Activated T-helper 1 cell treated with anti-CD3 and anti-CD28 coated beads, Interleukin-12 subunit alpha, Interleukin-12 subunit beta, Interleukin-2, Interleukin-4 antibody, amounts not matched to agents 30 ng/mL and 10 ng/mL and 1 ng/mL, durations not matched to agents 14 hours and 24 hours and 36 hours (primary cell): ENCODE measurements at regions of chr2 and their contacts with region 1.

Region 1: DNA sequence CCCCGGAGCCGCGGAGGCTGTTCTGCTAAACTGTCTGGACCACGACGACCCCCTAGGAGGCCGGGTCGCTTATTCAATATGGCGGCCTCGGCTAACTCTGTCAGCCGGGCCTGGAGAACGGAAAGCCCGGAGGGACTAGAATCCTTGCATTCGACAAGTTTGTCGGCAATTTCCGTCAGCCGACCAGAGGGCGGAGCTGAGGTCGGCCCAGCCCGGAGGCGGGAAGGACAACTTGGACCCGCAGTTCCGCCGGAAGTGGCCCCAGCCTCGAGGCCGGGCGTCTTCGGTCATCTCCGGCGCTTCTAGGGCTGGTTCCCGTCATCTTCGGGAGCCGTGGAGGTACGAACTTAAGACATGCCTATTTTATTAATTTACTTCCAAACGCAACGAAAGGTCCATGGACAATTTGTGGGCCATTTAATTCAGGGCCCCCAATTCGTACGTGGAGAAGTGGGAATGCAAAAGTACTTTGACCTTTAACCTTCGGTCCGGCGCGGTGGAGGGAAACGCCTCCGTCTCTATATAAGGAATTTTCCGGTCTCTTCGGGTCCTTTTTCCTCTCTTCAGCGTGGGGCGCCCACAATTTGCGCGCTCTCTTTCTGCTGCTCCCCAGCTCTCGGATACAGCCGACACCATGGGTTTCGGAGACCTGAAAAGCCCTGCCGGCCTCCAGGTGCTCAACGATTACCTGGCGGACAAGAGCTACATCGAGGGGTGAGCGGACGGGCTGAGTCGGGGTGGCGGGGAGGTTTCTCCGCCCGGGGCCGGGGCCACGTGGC is at the starts of genes EEF1B2 and NDUFS1:
- DNase-seq: peak; percentile 97
- H3K4me3 Mint-ChIP-seq: peak within 1 kb of the TSS; percentile 99
- H3K27ac Mint-ChIP-seq: peak within 1 kb of the TSS; percentile 99
- H3K4me1 Mint-ChIP-seq: peaks cover 52% of the 10 kb centered on the region
- H3K27me3 Mint-ChIP-seq: no peaks in the 10 kb centered on the region
- total RNA-seq, gene EEF1B2: 698 and 711 TPM in 2 replicates
- total RNA-seq, gene NDUFS1: 76.6 and 78.0 TPM in 2 replicates

Region 2: DNA sequence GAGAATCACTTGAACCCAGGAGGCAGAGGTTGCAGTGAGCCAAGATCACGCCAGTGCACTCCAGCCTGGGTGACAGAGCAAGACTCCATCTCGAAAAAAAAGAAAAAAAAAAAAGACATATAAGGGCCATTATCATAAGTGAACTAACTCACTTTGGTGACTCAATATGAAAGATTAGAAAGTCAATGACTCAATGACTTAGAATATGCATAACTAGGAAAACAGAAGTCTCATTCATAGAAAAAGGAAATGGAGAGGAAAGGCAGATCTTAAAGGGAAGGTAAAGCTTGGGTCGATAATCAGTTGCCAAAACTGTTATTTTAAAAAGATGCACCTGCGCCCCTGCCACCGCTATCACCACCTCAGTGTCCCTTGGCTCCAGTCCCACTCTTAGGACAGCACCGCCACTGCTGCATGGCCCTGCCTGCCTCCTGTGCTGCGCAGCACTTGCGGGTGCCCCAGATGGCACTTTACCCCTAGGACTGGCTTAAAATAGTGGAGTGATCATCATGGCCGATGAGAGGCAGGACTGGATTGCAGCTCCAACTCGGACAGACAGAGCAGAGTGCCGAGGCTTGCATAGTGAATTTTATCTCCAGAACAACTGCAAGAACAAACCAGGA is 128.3 kb before region 1 on chr2:
- intact Hi-C with region 1: loop called (anchors 1 kb)
- DNase-seq: no peak
- H3K4me3 Mint-ChIP-seq: no peak overlapping the region
- H3K27ac Mint-ChIP-seq: peak overlapping the region; percentile 25
- H3K4me1 Mint-ChIP-seq: peaks cover 55% of the 10 kb centered on the region
- H3K27me3 Mint-ChIP-seq: no peaks in the 10 kb centered on the region

Region 3: DNA sequence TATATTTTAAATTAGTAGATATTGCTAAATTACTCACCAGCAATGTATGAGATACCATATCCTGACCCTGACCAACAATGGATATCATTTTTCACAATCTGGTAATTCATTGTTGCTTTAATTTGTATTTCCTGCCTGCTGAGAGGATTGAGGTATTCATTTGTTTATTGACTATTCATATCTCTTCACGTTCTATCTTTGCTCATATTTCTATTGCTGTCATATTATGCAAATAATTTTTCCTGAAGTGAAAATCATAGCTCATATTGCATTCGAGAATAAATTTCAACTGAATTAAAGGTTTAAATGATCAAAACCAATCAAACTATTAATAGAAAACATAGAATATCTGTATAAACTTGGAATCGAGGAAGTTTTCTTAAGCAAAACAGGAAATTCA is 104.6 kb before region 1 on chr2:
- intact Hi-C with region 1: no loop called
- DNase-seq: no peak
- H3K4me3 Mint-ChIP-seq: no peak overlapping the region
- H3K27ac Mint-ChIP-seq: no peak overlapping the region
- H3K4me1 Mint-ChIP-seq: no peaks in the 10 kb centered on the region
- H3K27me3 Mint-ChIP-seq: no peaks in the 10 kb centered on the region

Region 4: DNA sequence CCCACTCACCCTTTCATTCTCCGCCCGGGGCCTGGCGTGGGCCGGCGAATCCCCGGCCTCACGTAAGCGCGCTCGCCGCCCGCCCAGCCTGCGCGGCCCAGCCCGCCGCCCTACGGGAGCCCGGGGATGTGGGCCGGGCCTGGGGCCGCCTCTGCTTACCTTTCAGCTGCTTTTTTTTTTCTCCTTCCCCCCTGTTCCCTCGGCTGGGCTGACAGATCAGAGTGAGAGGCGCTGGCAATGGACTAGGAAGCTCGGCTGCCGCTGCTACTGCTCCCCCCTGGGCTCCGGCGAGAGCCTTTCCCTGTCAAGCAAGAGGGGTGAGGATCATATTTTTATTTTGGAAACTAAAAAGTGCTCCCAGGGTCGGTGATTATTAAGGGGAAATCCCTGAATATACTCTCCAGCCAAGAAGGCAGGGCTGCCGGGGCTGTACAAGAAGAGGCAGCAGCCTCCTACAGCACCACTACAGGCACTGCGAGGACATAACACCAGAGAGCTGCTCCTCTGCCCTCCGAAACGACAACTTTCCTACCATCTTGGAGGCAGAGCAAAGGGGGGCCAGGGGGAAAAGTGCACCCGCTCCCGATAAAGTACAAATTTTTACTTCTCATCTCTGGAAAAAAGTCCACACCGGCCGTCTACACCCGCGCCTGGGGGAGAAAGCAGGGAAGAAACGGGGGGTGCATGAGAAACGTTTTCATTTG is 73.6 kb before region 1 on chr2 and contains the start of gene INO80D:
- intact Hi-C with region 1: loop called (anchors 1 kb)
- DNase-seq: peak; percentile 72
- H3K4me3 Mint-ChIP-seq: peak within 1 kb of the TSS; percentile 99
- H3K27ac Mint-ChIP-seq: peak within 1 kb of the TSS; percentile 99
- H3K4me1 Mint-ChIP-seq: peaks cover 30% of the 10 kb centered on the region
- H3K27me3 Mint-ChIP-seq: peaks cover 2% of the 10 kb centered on the region
- total RNA-seq, gene INO80D: 29.4 and 30.3 TPM in 2 replicates

Region 5: DNA sequence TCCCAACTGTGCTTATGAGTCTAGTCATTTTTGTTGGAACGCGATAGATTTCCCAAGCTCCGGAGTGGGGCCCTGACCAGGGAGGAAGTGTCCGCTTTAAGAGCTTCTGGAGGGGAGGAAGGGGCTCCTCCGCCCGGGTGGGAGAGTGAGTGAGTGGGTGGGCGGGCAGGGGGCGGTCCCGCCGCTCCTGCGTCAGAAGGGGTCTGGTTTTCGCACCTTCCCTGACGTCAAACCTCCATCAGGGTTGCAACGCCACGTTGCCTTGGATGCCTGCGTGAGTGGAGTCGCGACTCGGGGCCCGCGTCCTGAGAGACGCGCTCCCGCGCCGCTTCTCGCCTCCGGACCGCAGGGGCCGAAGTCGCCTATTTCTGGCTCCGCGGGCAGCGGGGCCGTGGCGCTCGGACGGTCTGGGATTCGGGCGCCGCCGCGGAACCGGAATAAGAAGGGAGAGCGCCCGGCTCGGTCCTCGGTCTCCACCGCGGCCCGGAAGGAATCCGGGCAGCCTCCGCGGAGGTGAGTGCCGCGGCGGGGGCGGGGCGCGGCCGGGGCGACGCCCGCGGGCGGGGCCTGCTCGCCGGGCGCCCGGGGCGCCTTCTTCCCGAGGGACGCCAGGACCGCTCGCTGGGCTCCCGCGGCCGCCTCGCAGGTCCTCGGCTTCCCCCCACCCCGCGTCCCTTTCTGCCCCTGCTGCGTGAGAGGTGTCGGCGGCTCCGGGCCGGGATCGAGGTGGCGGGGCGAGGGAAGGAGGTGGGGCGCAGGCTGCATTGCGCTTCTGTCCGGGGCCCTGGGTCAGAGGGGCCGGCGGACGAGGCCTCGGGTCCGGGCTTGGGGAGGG is 115.1 kb after region 1 on chr2 and contains the start of gene ZDBF2:
- intact Hi-C with region 1: loop called (anchors 1 kb)
- DNase-seq: peak; percentile 46
- H3K4me3 Mint-ChIP-seq: peak within 1 kb of the TSS; percentile 87
- H3K27ac Mint-ChIP-seq: peak within 1 kb of the TSS; percentile 86
- H3K4me1 Mint-ChIP-seq: peaks cover 27% of the 10 kb centered on the region
- H3K27me3 Mint-ChIP-seq: peaks cover 48% of the 10 kb centered on the region
- total RNA-seq, gene ZDBF2: 9.3 and 11.4 TPM in 2 replicates

Region 6: GRCh38 chr2:206361407-206362045 is 202.0 kb after region 1 on chr2:
- intact Hi-C with region 1: loop called (anchors 2 kb)
- DNase-seq: no peak
- H3K4me3 Mint-ChIP-seq: no peak overlapping the region
- H3K27ac Mint-ChIP-seq: peak overlapping the region; percentile 22
- H3K4me1 Mint-ChIP-seq: peaks cover 5% of the 10 kb centered on the region
- H3K27me3 Mint-ChIP-seq: no peaks in the 10 kb centered on the region

Region 7: DNA sequence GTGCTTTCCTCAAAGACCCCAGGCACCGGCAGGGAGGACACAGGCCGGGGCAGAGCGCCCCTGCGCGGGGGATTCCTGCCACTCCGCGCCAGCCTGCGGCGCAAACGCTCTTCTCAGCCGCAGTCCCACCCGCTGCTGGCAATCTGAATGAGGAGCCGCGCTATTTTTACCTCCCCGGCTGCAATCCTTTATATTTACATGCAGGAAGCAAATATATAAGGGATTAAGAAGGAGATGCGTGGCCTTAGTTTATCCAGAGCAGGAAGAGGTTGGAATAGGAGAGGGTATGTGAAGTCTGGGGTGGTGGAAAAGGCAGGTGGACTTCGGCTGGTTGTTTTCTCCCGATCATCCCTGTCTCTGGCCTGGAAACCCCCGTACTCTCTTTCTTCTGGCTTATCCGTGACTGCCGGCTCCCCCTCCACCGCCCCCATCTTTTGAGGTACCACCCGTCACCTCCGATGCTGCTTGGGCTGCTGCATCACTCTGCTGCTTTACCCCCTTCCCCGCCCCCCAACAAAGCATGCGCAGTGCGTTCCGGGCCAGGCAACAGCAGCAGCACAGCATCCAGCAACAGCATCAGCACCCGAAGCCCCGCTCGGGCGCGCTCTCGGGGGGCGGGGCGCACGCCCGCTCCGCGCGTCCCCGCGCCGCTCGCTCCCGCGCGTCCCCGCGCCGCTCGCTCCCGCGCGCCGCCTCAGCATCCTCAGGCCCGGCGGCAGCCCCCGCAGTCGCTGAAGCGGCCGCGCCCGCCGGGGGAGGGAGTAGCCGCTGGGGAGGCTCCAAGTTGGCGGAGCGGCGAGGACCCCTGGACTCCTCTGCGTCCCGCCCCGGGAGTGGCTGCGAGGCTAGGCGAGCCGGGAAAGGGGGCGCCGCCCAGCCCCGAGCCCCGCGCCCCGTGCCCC is 283.5 kb after region 1 on chr2 and contains the start of gene ADAM23:
- intact Hi-C with region 1: loop called (anchors 5 kb)
- DNase-seq: peak; percentile 26
- H3K4me3 Mint-ChIP-seq: peak within 1 kb of the TSS; percentile 77
- H3K27ac Mint-ChIP-seq: peak within 1 kb of the TSS; percentile 73
- H3K4me1 Mint-ChIP-seq: peaks cover 12% of the 10 kb centered on the region
- H3K27me3 Mint-ChIP-seq: peaks cover 61% of the 10 kb centered on the region
- total RNA-seq, gene ADAM23: 0.15 and 0.16 TPM in 2 replicates

Region 8: DNA sequence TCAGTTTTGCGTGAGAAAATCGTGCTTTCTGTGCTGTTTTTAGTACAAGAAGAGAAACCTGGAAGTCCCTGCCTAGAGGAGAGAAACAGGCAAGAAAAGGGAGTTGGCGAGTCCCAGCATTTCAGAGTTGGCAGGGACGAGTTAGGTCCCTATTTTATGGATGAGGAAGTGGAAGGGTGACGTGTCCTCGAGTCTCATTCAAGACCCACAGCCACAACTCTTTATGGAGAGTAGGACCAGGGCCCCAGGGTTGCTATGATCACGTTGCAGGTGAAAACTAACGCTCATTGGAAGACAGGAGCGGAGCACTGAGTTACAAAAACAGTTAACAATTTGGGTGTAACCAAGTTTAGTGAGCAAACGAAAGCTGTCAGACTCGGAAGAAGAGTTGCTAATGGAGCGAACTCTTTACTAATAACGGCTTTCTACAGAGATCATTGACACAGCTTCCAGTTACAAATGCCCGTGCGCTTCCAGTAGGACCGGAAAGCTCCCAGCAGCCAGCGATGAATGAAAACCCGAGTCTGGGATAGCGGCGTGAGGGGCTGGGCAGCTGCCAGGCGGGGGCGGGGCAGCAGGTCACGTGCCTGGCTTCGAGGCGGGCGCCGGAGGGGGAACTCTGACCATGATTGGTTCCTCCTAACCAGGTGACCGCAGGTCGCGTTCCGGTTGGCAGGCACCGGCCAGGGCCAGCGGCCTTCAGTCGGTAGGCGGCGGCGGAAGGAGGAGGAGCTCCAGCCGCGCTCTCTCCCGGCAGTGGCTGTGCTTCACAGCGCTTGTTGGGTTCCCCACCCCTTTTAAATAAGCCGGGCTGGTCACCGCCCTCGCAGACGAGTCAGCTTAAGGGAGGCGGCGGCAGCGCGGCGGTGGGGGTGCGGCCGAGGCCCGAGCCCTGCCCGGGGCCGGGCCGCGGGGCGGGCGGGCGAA is 1551.5 kb after region 1 on chr2 and contains the start of gene CCNYL1:
- intact Hi-C with region 1: loop called (anchors 5 kb)
- DNase-seq: peak; percentile 98
- H3K4me3 Mint-ChIP-seq: peak within 1 kb of the TSS; percentile 96
- H3K27ac Mint-ChIP-seq: peak within 1 kb of the TSS; percentile 76
- H3K4me1 Mint-ChIP-seq: peaks cover 36% of the 10 kb centered on the region
- H3K27me3 Mint-ChIP-seq: no peaks in the 10 kb centered on the region
- total RNA-seq, gene CCNYL1: 6.8 and 8.7 TPM in 2 replicates